A549 (cell line): ENCODE measurements at regions of chr21 and their contacts with region 1.

Region 1: GRCh38 chr21:29372063-29372802 is 73.5 kb downstream of the BACH1 start:
- DNase-seq: peak; percentile 50 to 75
- ATAC-seq: peak; percentile 95 to 97
- H3K4me3 ChIP-seq: no peak overlapping the region
- H3K27ac ChIP-seq: no peak overlapping the region
- H3K4me1 ChIP-seq: no peaks in the 10 kb centered on the region
- CTCF ChIP-seq: peak; percentile 59
- EP300 ChIP-seq: no peak
- POLR2A ChIP-seq: no peak
- RAD21 ChIP-seq: peak; percentile 72 to 79

Region 2: GRCh38 chr21:29091032-29091431 is 281.2 kb before region 1 on chr21:
- CTCF ChIA-PET with region 1: interaction called, 11 read pairs
- POLR2A ChIA-PET with region 1: no interaction called
- DNase-seq: peak in 1 of 2 experiments; percentile 7
- ATAC-seq: peak in 1 of 2 experiments; percentile 51; a peak in 2 of 6 replicates
- H3K4me3 ChIP-seq: no peak overlapping the region
- H3K27ac ChIP-seq: no peak overlapping the region
- H3K4me1 ChIP-seq: peaks cover 12% of the 10 kb centered on the region
- CTCF ChIP-seq: no peak
- EP300 ChIP-seq: no peak
- POLR2A ChIP-seq: no peak
- RAD21 ChIP-seq: no peak

Region 3: GRCh38 chr21:29360799-29361765 is 11.2 kb before region 1 on chr21:
- CTCF ChIA-PET with region 1: interaction called, 15 read pairs
- POLR2A ChIA-PET with region 1: no interaction called
- DNase-seq: peak in 1 of 2 experiments; percentile 12
- ATAC-seq: no peak
- H3K4me3 ChIP-seq: no peak overlapping the region
- H3K27ac ChIP-seq: no peak overlapping the region
- H3K4me1 ChIP-seq: no peaks in the 10 kb centered on the region
- CTCF ChIP-seq: no peak
- EP300 ChIP-seq: no peak
- POLR2A ChIP-seq: no peak
- RAD21 ChIP-seq: no peak

Region 4: GRCh38 chr21:29511096-29511495 is 138.9 kb after region 1 on chr21:
- CTCF ChIA-PET with region 1: no interaction called
- POLR2A ChIA-PET with region 1: no interaction called
- DNase-seq: no peak
- ATAC-seq: no peak
- H3K4me3 ChIP-seq: no peak overlapping the region
- H3K27ac ChIP-seq: no peak overlapping the region
- H3K4me1 ChIP-seq: no peaks in the 10 kb centered on the region
- CTCF ChIP-seq: no peak
- EP300 ChIP-seq: no peak
- POLR2A ChIP-seq: no peak
- RAD21 ChIP-seq: no peak